ENCODE measurements at regions of chr12 and their contacts with region 1.

Region 1: GRCh38 chr12:86600664-86601231 is 344.6 kb upstream of the MGAT4C start:
- DNase-seq: no peak
- ATAC-seq: no peak
- H3K4me3 ChIP-seq: no peak overlapping the region
- H3K27ac ChIP-seq: no peak overlapping the region
- H3K4me1 ChIP-seq: no peaks in the 10 kb centered on the region
- H3K27me3 ChIP-seq: no peaks in the 10 kb centered on the region
- CTCF ChIP-seq: no peak

Region 2: GRCh38 chr12:86613311-86613710 is 12.6 kb after region 1 on chr12:
- CTCF ChIA-PET with region 1: no interaction called
- POLR2A ChIA-PET with region 1: interaction called, 24 read pairs
- in situ Hi-C with region 1: no loop called
- intact Hi-C with region 1: no loop called
- DNase-seq: no peak
- ATAC-seq: no peak
- H3K4me3 ChIP-seq: no peak overlapping the region
- H3K27ac ChIP-seq: no peak overlapping the region
- H3K4me1 ChIP-seq: no peaks in the 10 kb centered on the region
- H3K27me3 ChIP-seq: no peaks in the 10 kb centered on the region
- CTCF ChIP-seq: no peak